ENCODE measurements at regions of chr10 and their contacts with region 1.

Region 1: GRCh38 chr10:96743988-96744585 is 23.8 kb upstream of the PIK3AP1 start:
- DNase-seq: peak; percentile 71
- H3K4me3 ChIP-seq: no peak overlapping the region
- H3K27ac ChIP-seq: peak overlapping the region; percentile 42
- H3K4me1 ChIP-seq: peaks cover 65% of the 10 kb centered on the region
- CTCF ChIP-seq: peak; percentile 87

Region 2: GRCh38 chr10:96229568-96230030 is 514.5 kb before region 1 on chr10:
- CTCF ChIA-PET with region 1: no interaction called
- POLR2A ChIA-PET with region 1: no interaction called
- intact Hi-C with region 1: no loop called
- DNase-seq: peak; percentile 91
- H3K4me3 ChIP-seq: no peak overlapping the region
- H3K27ac ChIP-seq: peak overlapping the region; percentile 60
- H3K4me1 ChIP-seq: peaks cover 26% of the 10 kb centered on the region
- CTCF ChIP-seq: peak; percentile 100

Region 3: GRCh38 chr10:96642973-96643372 is 101.1 kb before region 1 on chr10:
- CTCF ChIA-PET with region 1: interaction called, 7 read pairs
- POLR2A ChIA-PET with region 1: no interaction called
- intact Hi-C with region 1: loop called (anchors 1 kb)
- DNase-seq: peak; percentile 87
- H3K4me3 ChIP-seq: no peak overlapping the region
- H3K27ac ChIP-seq: peak overlapping the region; percentile 14
- H3K4me1 ChIP-seq: peaks cover 25% of the 10 kb centered on the region
- CTCF ChIP-seq: peak; percentile 98